ENCODE measurements at regions of chr3 and their contacts with region 1.

Region 1: GRCh38 chr3:12158387-12159226 is at the start of gene TIMP4:
- DNase-seq: peak; percentile 36 to 69
- H3K4me3 ChIP-seq: peak within 1 kb of the TSS; percentile 42 to 57 (median 44); a peak in 7 of 8 replicates
- H3K27ac ChIP-seq: no peak within 1 kb of the TSS; the same call in 1 of the 2 replicates
- H3K4me1 ChIP-seq: peaks cover 4 to 15% (median 15%) of the 10 kb centered on the region in 4 experiments; a peak in 6 of 7 replicates
- H3K27me3 ChIP-seq: no peaks in the 10 kb centered on the region
- CTCF ChIP-seq: no peak
- EP300 ChIP-seq: no peak
- POLR2A ChIP-seq: no peak
- RAD21 ChIP-seq: no peak
- total RNA-seq, gene TIMP4: 7.5 and 8.7 TPM in 2 replicates

Region 2: DNA sequence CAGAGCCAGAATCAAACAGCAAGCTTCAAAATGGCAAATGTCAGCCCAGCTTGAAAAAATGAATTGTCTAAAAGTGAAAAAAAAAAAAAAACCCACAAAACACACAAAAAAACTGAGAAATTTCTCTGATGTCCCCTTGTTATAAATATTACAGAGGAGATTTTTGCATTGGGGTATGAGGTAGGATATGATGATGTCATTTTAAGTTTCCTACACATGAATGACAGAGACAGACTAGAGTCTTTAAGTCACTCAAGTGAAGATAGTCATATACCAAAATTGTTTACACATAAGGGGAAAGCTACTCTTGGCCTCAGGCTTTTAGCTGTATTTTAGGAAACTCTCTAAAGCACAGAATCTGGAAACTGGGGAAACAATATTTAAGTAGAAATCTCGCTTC is 32.8 kb before region 1 on chr3:
- CTCF ChIA-PET with region 1: no interaction called
- POLR2A ChIA-PET with region 1: no interaction called
- DNase-seq: no peak
- H3K4me3 ChIP-seq: no peak overlapping the region
- H3K27ac ChIP-seq: no peak overlapping the region
- H3K4me1 ChIP-seq: no peaks in the 10 kb centered on the region
- H3K27me3 ChIP-seq: no peaks in the 10 kb centered on the region
- CTCF ChIP-seq: no peak
- EP300 ChIP-seq: no peak
- POLR2A ChIP-seq: no peak
- RAD21 ChIP-seq: no peak

Region 3: GRCh38 chr3:12143949-12144504 is 14.6 kb before region 1 on chr3:
- CTCF ChIA-PET with region 1: interaction called, 18 read pairs
- POLR2A ChIA-PET with region 1: interaction called, 10 read pairs
- DNase-seq: no peak
- H3K4me3 ChIP-seq: no peak overlapping the region
- H3K27ac ChIP-seq: no peak overlapping the region
- H3K4me1 ChIP-seq: no peaks in the 10 kb centered on the region
- H3K27me3 ChIP-seq: no peaks in the 10 kb centered on the region
- CTCF ChIP-seq: no peak
- EP300 ChIP-seq: no peak
- POLR2A ChIP-seq: no peak
- RAD21 ChIP-seq: no peak

Region 4: DNA sequence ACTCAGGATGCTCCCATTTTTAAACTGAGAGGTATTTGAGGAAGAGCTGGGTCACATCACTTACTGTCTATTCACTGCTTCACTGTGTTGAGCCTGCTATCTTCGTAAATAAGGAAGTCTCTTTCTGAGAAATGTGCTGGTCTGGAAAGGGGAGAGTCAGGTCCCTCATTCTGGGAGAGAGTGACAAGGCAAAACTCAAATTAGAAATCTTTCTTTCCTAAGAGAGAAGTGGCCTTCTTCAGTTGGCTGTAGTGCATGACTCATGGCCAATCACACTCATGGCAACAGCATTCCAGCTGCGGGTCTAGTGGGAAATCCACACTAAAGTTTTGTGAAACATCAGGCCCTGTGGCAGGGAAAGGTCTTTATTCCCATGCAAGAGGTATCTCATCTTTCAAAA is 11.6 kb after region 1 on chr3:
- CTCF ChIA-PET with region 1: interaction called, 651 read pairs
- POLR2A ChIA-PET with region 1: interaction called, 3 read pairs
- DNase-seq: no peak
- H3K4me3 ChIP-seq: no peak overlapping the region
- H3K27ac ChIP-seq: no peak overlapping the region
- H3K4me1 ChIP-seq: no peaks in the 10 kb centered on the region
- H3K27me3 ChIP-seq: no peaks in the 10 kb centered on the region
- CTCF ChIP-seq: no peak
- EP300 ChIP-seq: no peak
- POLR2A ChIP-seq: no peak
- RAD21 ChIP-seq: no peak

Measured in H1 (cell line).